WTC11 (cell line): ENCODE measurements at regions of chr19 and their contacts with region 1.

Region 1: GRCh38 chr19:18322759-18323460 is at the start of gene LSM4:
- DNase-seq: peak; percentile 100
- ATAC-seq: peak; percentile 93
- H3K4me3 Mint-ChIP-seq: peak within 1 kb of the TSS; percentile 86
- H3K27ac Mint-ChIP-seq: peak within 1 kb of the TSS; percentile 100
- H3K4me1 Mint-ChIP-seq: peaks cover 42% of the 10 kb centered on the region
- H3K27me3 Mint-ChIP-seq: no peaks in the 10 kb centered on the region; the same call in 1 of the 2 replicates
- CTCF ChIP-seq: no peak
- total RNA-seq, gene LSM4: 373 to 434 TPM (median 409 TPM) in 3 replicates

Region 2: DNA sequence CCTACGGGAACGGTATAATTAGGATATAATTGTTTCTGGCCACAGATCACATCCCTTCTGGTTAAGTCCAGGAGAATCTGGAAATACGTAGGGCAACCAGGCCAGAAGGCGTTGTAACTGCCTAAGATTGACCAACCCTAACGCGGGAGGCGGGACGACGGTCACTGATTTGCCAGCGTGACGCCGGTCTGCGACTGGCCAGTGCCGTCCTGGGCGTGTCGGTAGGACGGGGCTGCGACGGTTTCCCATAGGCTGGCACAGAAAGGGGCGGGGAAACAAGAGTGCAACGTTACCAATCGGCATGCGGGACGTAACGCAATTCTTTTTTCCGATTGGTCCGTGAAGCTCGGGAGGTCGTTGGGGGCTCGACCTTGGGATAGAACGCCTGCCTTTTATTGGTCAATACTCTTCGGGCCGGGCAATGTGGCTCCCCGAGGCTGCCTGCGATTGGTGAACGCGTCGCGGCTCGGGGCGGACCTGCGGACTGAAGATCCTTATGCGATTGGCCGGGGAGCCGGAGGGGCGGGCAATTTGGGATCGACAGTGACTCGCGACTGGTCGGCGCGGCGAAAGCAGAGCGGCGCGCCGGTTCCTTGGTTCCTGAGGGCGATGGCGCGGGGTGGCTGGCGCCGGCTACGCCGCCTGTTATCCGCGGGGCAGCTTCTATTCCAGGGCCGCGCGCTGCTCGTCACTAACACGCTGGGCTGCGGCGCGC is 130.1 kb before region 1 on chr19 and contains the start of gene MPV17L2:
- CTCF ChIA-PET with region 1: no interaction called
- POLR2A ChIA-PET with region 1: no interaction called
- DNase-seq: peak; percentile 99
- ATAC-seq: peak; percentile 94
- H3K4me3 Mint-ChIP-seq: peak within 1 kb of the TSS; percentile 82
- H3K27ac Mint-ChIP-seq: peak within 1 kb of the TSS; percentile 97
- H3K4me1 Mint-ChIP-seq: peaks cover 20% of the 10 kb centered on the region
- H3K27me3 Mint-ChIP-seq: peaks cover 2% of the 10 kb centered on the region; the same call in 1 of the 2 replicates
- CTCF ChIP-seq: no peak
- total RNA-seq, gene MPV17L2: 26.3 to 29.8 TPM (median 28.0 TPM) in 3 replicates

Region 3: DNA sequence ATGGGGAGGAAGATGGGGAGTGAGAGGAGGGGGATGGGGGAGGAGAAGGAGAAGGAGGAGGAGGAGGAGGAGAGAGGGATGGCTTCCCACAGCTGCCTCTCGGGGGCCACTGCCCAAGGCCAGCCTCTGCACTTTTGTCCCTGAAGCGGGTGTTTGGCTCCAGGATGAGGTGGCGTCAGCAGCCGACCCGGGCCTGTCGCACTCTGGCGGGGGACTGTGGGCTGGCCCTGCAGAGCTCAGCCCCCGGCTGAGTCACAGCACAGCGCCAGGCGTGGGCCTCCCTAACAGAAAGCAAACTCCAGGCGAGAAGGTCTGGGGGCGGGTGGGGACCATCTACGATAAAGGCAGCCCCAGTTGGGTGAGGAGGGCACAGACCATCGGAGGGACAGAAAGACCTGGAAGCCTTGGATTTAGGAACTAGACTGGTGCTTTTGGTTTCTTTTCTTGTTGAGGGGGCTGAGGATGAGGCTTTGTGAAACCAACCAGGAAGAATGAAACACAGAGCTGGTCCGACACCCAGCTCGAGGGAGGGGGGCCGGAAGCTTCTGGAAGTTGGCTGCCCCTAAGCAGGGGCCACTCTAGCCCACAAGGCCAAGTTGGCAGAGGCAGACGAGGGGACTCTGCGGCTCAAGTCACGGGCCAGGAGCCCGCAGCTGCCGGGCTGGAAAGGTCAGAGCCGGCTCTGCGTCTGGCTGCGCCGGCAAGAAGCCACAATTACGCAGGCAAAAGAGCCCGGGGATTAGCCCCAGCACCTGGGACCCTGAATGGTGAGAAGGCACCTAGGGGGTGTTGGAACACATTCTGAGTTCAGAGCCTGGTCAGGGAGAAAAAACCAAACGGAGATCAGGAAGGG is 18.2 kb before region 1 on chr19:
- CTCF ChIA-PET with region 1: interaction called, 19 read pairs
- POLR2A ChIA-PET with region 1: interaction called, 13 read pairs
- DNase-seq: peak; percentile 45
- ATAC-seq: peak; percentile 46
- H3K4me3 Mint-ChIP-seq: peak overlapping the region; percentile 59
- H3K27ac Mint-ChIP-seq: peak overlapping the region; percentile 67
- H3K4me1 Mint-ChIP-seq: peaks cover 39% of the 10 kb centered on the region
- H3K27me3 Mint-ChIP-seq: no peaks in the 10 kb centered on the region
- CTCF ChIP-seq: no peak